Cardiac septum (tissue), 1 donor: ENCODE measurements at regions of chr17 and their contacts with region 1.

Region 1: GRCh38 chr17:7436351-7437206 is 1.3 kb downstream of the TMEM102 start:
- DNase-seq: peak; percentile 91

Region 2: DNA sequence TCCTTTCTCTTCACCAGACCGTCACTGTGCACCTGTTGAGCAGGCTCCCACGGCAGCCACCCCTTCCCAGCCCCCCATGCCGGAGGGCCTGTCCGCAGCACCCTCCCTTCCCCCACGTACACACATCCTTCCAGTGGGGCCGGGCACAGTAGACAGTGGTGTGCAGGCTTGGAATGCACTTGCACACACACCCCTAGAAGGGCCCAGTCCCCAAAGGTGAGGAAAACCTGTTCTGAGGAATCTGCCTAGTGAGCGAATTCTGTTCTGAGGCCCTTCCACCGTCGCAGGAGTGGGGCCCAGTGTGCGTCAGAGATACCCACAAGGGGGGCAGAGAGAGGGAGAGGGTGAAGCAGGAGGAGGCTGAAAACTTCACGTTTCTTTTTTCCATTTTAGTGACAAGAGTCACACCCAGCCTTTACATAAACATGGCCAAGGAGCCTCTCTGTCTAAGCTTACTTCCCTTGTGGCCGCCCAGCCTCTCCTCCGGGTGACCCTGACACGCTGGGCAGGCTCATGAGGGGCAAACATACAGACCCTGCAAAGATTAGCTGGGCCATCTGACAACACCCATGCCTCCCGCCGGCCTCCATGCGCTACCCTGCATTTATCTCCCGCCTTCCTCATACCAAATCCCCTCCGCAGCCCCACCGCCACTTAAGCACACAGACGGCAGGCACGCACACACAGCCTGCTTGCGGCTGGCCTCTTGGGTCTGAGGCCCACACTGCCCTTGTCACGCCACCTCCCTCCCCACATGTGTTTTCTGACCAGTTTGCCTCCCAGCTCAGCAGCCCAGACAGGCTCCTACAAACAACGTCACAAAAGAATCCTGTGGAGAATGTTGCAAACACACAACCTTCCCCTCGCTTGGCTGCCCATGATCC is 41.1 kb after region 1 on chr17:
- intact Hi-C with region 1: loop called (anchors 2 kb)
- DNase-seq: no peak

Region 3: DNA sequence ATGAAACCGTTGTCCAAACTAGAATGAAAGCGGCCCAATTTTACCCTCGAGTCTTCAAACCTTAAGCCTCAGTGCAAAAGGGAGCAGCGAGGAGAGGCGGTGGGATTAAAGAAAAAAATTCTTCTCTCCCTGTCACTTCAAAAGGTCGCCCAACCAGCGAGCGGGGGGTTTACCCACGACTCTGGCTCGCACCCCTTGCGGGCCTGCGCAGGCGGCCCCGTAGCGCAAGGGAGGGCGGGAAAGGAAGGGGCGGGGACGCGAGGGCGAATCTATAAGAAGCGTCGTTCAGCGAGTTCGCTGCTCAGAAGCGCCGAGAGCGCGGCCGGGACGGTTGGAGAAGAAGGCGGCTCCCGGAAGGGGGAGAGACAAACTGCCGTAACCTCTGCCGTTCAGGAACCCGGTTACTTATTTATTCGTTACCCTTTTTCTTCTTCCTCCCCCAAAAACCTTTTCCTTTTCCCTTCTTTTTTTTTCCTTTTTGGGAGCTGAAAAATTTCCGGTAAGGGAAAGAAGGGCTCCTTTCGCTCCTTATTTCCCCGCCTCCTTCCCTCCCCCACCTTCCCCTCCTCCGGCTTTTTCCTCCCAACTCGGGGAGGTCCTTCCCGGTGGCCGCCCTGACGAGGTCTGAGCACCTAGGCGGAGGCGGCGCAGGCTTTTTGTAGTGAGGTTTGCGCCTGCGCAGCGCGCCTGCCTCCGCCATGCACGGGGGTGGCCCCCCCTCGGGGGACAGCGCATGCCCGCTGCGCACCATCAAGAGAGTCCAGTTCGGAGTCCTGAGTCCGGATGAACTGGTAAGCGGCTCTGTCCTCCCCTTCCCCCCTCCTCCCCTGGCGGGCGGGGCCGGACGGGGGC is 47.7 kb after region 1 on chr17 and contains the start of gene POLR2A:
- intact Hi-C with region 1: loop called (anchors 2 kb)
- DNase-seq: peak; percentile 99
- total RNA-seq, gene POLR2A: 56.4 TPM